ENCODE measurements at regions of chr2 and their contacts with region 1.

Region 1: GRCh38 chr2:72745679-72746368 is 80.0 kb downstream of the EXOC6B start:
- DNase-seq: peak; percentile 21
- CTCF ChIP-seq: peak; percentile 42

Region 2: GRCh38 chr2:71933467-71934319 is 812.1 kb before region 1 on chr2:
- in situ Hi-C with region 1: loop called (anchors 25 kb)
- DNase-seq: peak; percentile 15
- CTCF ChIP-seq: no peak

Region 3: GRCh38 chr2:72150157-72150865 is 595.5 kb before region 1 on chr2:
- in situ Hi-C with region 1: loop called (anchors 25 kb)
- DNase-seq: peak; percentile 82
- CTCF ChIP-seq: peak; percentile 53